ENCODE measurements at regions of chr11 and their contacts with region 1.

Region 1: GRCh38 chr11:8070417-8071115 is 10.4 kb upstream of the TUB start:
- DNase-seq: no peak
- ATAC-seq: peak; percentile 40
- H3K4me3 Mint-ChIP-seq: no peak overlapping the region
- H3K27ac Mint-ChIP-seq: no peak overlapping the region
- H3K4me1 Mint-ChIP-seq: peaks cover 48% of the 10 kb centered on the region
- H3K27me3 Mint-ChIP-seq: peaks cover 12% of the 10 kb centered on the region; the same call in 1 of the 2 replicates
- CTCF ChIP-seq: no peak

Region 2: GRCh38 chr11:7457211-7457610 is 613.4 kb before region 1 on chr11:
- CTCF ChIA-PET with region 1: no interaction called
- POLR2A ChIA-PET with region 1: no interaction called
- DNase-seq: no peak
- ATAC-seq: no peak
- H3K4me3 Mint-ChIP-seq: no peak overlapping the region
- H3K27ac Mint-ChIP-seq: no peak overlapping the region
- H3K4me1 Mint-ChIP-seq: no peaks in the 10 kb centered on the region
- H3K27me3 Mint-ChIP-seq: no peaks in the 10 kb centered on the region; the same call in 1 of the 2 replicates
- CTCF ChIP-seq: no peak

Region 3: GRCh38 chr11:8023831-8024555 is 46.6 kb before region 1 on chr11:
- CTCF ChIA-PET with region 1: no interaction called
- POLR2A ChIA-PET with region 1: no interaction called
- DNase-seq: no peak
- ATAC-seq: no peak
- H3K4me3 Mint-ChIP-seq: no peak overlapping the region
- H3K27ac Mint-ChIP-seq: no peak overlapping the region
- H3K4me1 Mint-ChIP-seq: peaks cover 7% of the 10 kb centered on the region
- H3K27me3 Mint-ChIP-seq: peaks cover 30% of the 10 kb centered on the region; the same call in 1 of the 2 replicates
- CTCF ChIP-seq: no peak

Region 4: DNA sequence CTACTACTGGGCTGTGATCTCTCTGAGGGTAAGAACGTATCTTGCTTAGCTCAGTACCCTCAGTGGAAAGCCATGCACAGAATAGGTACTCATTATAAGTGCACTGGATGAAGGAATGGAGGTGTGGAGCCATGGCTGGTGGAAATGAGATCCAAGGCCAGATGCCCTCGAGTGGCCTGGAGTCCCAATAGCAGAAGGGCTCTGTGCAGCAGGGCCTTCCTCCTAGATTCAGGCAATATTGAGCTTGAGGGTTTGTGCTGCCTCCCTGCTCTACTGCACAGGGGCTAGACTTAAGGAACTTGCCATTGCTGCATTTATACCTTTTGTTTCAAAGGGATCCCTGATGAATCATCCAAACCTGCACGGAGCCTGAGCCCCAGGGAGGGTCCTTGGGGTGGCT is 23.2 kb before region 1 on chr11:
- CTCF ChIA-PET with region 1: no interaction called
- POLR2A ChIA-PET with region 1: no interaction called
- DNase-seq: no peak
- ATAC-seq: no peak
- H3K4me3 Mint-ChIP-seq: no peak overlapping the region
- H3K27ac Mint-ChIP-seq: no peak overlapping the region
- H3K4me1 Mint-ChIP-seq: no peaks in the 10 kb centered on the region
- H3K27me3 Mint-ChIP-seq: peaks cover 10% of the 10 kb centered on the region
- CTCF ChIP-seq: no peak

Region 5: DNA sequence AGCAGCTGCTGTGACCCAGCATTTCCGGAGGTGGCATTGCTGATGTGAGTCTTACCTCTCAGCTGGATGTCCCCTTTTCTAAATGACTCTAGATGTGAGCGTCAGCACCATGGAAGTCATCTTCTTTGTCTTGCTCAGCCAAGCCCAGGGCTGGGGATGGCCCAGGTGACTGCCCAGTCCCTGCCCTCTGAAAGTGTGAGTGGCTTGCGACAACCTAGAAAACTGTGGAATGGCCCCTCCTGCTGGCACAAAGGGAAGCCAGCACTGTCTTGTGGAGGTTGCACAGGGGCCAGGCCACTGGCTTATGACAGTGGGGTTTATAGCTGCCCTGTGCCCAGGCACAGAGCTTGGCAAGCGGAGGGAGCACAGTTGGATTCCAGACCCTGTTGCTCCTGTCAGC is 16.6 kb after region 1 on chr11:
- CTCF ChIA-PET with region 1: interaction called, 35 read pairs
- POLR2A ChIA-PET with region 1: no interaction called
- DNase-seq: peak; percentile 59
- ATAC-seq: peak; percentile 29
- H3K4me3 Mint-ChIP-seq: no peak overlapping the region
- H3K27ac Mint-ChIP-seq: no peak overlapping the region
- H3K4me1 Mint-ChIP-seq: peaks cover 52% of the 10 kb centered on the region
- H3K27me3 Mint-ChIP-seq: peaks cover 3% of the 10 kb centered on the region; the same call in 1 of the 2 replicates
- CTCF ChIP-seq: 0 out of 2 replicates have a peak, but pooled peaks have one; percentile 14

Region 6: GRCh38 chr11:8219257-8220021 is 148.9 kb after region 1 on chr11:
- CTCF ChIA-PET with region 1: no interaction called
- POLR2A ChIA-PET with region 1: no interaction called
- DNase-seq: peak; percentile 75
- ATAC-seq: peak; percentile 92
- H3K4me3 Mint-ChIP-seq: no peak overlapping the region
- H3K27ac Mint-ChIP-seq: no peak overlapping the region
- H3K4me1 Mint-ChIP-seq: peaks cover 12% of the 10 kb centered on the region
- H3K27me3 Mint-ChIP-seq: no peaks in the 10 kb centered on the region; the same call in 1 of the 2 replicates
- CTCF ChIP-seq: peak; percentile 54

Measured in WTC11 (cell line).